ENCODE measurements at regions of chr12 and their contacts with region 1.

Region 1: GRCh38 chr12:27710592-27711316 is at the start of gene MRPS35:
- DNase-seq: peak; percentile 95
- H3K4me3 Mint-ChIP-seq: peak within 1 kb of the TSS; percentile 98
- H3K27ac Mint-ChIP-seq: peak within 1 kb of the TSS; percentile 92
- H3K4me1 Mint-ChIP-seq: peaks cover 18% of the 10 kb centered on the region
- H3K27me3 Mint-ChIP-seq: no peaks in the 10 kb centered on the region
- total RNA-seq, gene MRPS35: 53.1 to 57.6 TPM

Region 2: GRCh38 chr12:27332407-27333301 is 378.1 kb before region 1 on chr12 and contains the start of gene BMAL2:
- CTCF ChIA-PET with region 1: no interaction called
- intact Hi-C with region 1: loop called (anchors 2 kb)
- DNase-seq: peak; percentile 44
- H3K4me3 Mint-ChIP-seq: peak within 1 kb of the TSS; percentile 90
- H3K27ac Mint-ChIP-seq: peak within 1 kb of the TSS; percentile 74
- H3K4me1 Mint-ChIP-seq: peaks cover 34% of the 10 kb centered on the region
- H3K27me3 Mint-ChIP-seq: peaks cover 30% of the 10 kb centered on the region
- total RNA-seq, gene BMAL2: 7.9 to 9.2 TPM

Region 3: DNA sequence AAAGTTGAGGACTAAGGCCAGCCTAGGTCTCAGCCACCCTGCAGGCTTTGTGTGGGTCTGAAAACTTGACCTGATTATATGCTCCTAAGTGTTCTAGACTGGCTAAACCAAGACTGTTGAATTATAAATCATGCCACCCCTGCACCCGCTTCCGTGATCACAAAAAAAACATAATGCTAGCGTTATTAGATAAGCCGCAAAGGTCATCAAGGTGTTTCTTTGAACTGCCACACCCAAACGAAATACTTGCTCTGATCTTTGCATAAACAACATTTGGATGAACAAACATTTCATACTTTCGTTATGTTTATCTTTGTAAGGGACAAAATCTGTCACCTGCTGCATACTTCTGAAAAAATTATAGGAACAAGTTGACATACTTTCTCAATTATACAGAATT is 261.7 kb before region 1 on chr12:
- CTCF ChIA-PET with region 1: no interaction called
- intact Hi-C with region 1: no loop called
- DNase-seq: no peak
- H3K4me3 Mint-ChIP-seq: no peak overlapping the region
- H3K27ac Mint-ChIP-seq: no peak overlapping the region
- H3K4me1 Mint-ChIP-seq: no peaks in the 10 kb centered on the region
- H3K27me3 Mint-ChIP-seq: peaks cover 9% of the 10 kb centered on the region

Region 4: DNA sequence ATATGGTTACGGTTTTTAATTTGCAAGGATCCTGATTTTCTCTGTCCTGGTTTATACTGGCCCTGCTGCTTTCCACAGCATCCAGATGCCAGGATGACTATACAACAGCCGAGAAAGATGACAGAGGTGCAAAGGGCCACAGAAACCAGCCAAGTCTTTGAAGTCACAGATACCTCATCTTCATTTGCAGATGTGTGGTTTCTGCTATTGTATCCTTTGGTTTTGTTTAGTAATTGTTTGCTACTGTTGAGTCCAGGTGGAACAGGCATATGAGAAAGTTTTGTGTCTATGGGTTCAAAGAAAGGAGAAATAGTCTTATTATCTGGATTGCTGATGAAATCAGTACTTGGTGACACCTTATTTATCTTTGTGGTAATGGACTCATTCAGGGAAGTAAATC is 52.0 kb after region 1 on chr12:
- CTCF ChIA-PET with region 1: no interaction called
- intact Hi-C with region 1: loop called (anchors 2 kb)
- DNase-seq: peak; percentile 41
- H3K4me3 Mint-ChIP-seq: no peak overlapping the region
- H3K27ac Mint-ChIP-seq: no peak overlapping the region
- H3K4me1 Mint-ChIP-seq: peaks cover 6% of the 10 kb centered on the region
- H3K27me3 Mint-ChIP-seq: no peaks in the 10 kb centered on the region

Region 5: GRCh38 chr12:27779920-27780611 is 69.3 kb after region 1 on chr12 and contains the starts of genes KLHL42 and MANSC4:
- CTCF ChIA-PET with region 1: no interaction called
- intact Hi-C with region 1: loop called (anchors 1 kb)
- DNase-seq: peak; percentile 71
- H3K4me3 Mint-ChIP-seq: peak within 1 kb of the TSS; percentile 82
- H3K27ac Mint-ChIP-seq: peak within 1 kb of the TSS; percentile 80
- H3K4me1 Mint-ChIP-seq: peaks cover 27% of the 10 kb centered on the region
- H3K27me3 Mint-ChIP-seq: no peaks in the 10 kb centered on the region
- total RNA-seq, gene KLHL42: 9.4 to 9.8 TPM
- total RNA-seq, gene MANSC4: not detected

Region 6: GRCh38 chr12:28190321-28191050 is 479.7 kb after region 1 on chr12 and contains the start of gene CCDC91:
- CTCF ChIA-PET with region 1: no interaction called
- intact Hi-C with region 1: loop called (anchors 1 kb)
- DNase-seq: peak; percentile 91
- H3K4me3 Mint-ChIP-seq: peak within 1 kb of the TSS; percentile 96
- H3K27ac Mint-ChIP-seq: peak within 1 kb of the TSS; percentile 97
- H3K4me1 Mint-ChIP-seq: peaks cover 57% of the 10 kb centered on the region
- H3K27me3 Mint-ChIP-seq: no peaks in the 10 kb centered on the region
- total RNA-seq, gene CCDC91: 15.3 to 16.1 TPM

Region 7: GRCh38 chr12:29380536-29381523 is 1670.1 kb after region 1 on chr12 and contains the start of gene ERGIC2:
- CTCF ChIA-PET with region 1: no interaction called
- intact Hi-C with region 1: loop called (anchors 1 kb)
- DNase-seq: peak; percentile 95
- H3K4me3 Mint-ChIP-seq: peak within 1 kb of the TSS; percentile 95
- H3K27ac Mint-ChIP-seq: peak within 1 kb of the TSS; percentile 96
- H3K4me1 Mint-ChIP-seq: peaks cover 47% of the 10 kb centered on the region
- H3K27me3 Mint-ChIP-seq: no peaks in the 10 kb centered on the region
- total RNA-seq, gene ERGIC2: 112 to 116 TPM